ENCODE measurements at regions of chr2 and their contacts with region 1.

Region 1: GRCh38 chr2:181742922-181743722 is 62.8 kb upstream of the NEUROD1 start:
- DNase-seq: peak; percentile 17
- ATAC-seq: peak; percentile 58
- H3K4me3 ChIP-seq: no peak overlapping the region
- H3K27ac ChIP-seq: no peak overlapping the region
- H3K4me1 ChIP-seq: no peaks in the 10 kb centered on the region
- H3K27me3 ChIP-seq: no peaks in the 10 kb centered on the region
- CTCF ChIP-seq: peak; percentile 47 to 72 (median 53); a peak in 5 of 6 replicates
- EP300 ChIP-seq: no peak
- POLR2A ChIP-seq: no peak
- RAD21 ChIP-seq: peak; percentile 83

Region 2: DNA sequence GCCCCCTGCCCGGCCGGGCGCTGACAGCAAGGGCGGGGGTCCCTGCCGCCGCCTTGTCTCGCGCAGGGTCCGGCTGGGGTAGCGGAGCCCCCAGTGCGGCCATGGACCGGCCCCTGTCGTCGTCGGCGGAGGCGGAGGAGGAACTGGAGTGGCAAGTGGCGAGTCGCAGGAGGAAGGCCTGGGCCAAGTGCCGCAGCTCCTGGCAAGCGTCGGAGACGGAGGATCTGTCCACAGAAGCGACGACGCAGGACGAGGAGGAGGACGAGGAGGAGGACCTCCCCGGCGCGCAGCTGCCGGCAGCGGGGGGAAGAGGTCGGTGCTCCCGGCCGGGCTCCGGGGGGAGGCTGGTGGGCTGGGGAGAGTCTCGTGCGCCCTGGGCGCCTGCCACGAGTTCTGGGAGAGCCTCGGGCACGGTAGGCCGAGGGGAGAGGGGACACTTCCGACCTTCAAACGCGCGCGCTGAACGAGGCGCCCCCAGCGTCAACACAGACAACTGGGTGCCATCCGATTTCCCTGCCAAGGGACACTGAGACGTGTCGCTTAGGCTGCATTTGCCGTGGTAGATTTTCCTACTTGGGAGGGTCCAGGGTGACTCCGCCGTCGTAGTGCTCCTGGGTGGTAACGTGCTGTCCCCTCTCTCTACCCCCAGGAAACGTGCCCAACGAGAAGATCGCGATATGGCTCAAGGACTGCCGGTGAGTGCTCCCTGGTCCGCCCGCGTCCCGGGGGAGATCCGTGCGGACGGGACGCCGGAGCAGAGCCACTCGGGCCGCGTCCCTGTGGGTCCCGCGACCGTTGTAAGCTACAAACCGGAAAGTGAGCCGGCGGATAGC is 149.1 kb after region 1 on chr2:
- CTCF ChIA-PET with region 1: interaction called, 12 read pairs
- POLR2A ChIA-PET with region 1: no interaction called
- RAD21 ChIA-PET with region 1: interaction called, 3 read pairs
- SMC1A ChIA-PET with region 1: interaction called, 4 read pairs
- in situ Hi-C with region 1: no loop called
- intact Hi-C with region 1: no loop called
- DNase-seq: no peak
- ATAC-seq: peak; percentile 82
- H3K4me3 ChIP-seq: peak overlapping the region; percentile 81
- H3K27ac ChIP-seq: peak overlapping the region; percentile 41
- H3K4me1 ChIP-seq: no peaks in the 10 kb centered on the region
- H3K27me3 ChIP-seq: no peaks in the 10 kb centered on the region
- CTCF ChIP-seq: peak; percentile 21 to 49 (median 40); a peak in 4 of 6 replicates
- EP300 ChIP-seq: no peak
- POLR2A ChIP-seq: peak; percentile 61
- RAD21 ChIP-seq: no peak

Region 3: GRCh38 chr2:181904022-181904632 is 161.0 kb after region 1 on chr2:
- CTCF ChIA-PET with region 1: interaction called, 53 read pairs
- POLR2A ChIA-PET with region 1: no interaction called
- RAD21 ChIA-PET with region 1: interaction called, 8 read pairs
- SMC1A ChIA-PET with region 1: interaction called, 13 read pairs
- in situ Hi-C with region 1: loop called (anchors 5 kb)
- intact Hi-C with region 1: loop called (anchors 1 kb)
- DNase-seq: no peak
- ATAC-seq: peak; percentile 85
- H3K4me3 ChIP-seq: no peak overlapping the region
- H3K27ac ChIP-seq: no peak overlapping the region
- H3K4me1 ChIP-seq: peaks cover 20% of the 10 kb centered on the region; the same call in 1 of the 2 replicates
- H3K27me3 ChIP-seq: no peaks in the 10 kb centered on the region
- CTCF ChIP-seq: peak; percentile 56
- EP300 ChIP-seq: no peak
- POLR2A ChIP-seq: no peak
- RAD21 ChIP-seq: peak; percentile 60

Region 4: DNA sequence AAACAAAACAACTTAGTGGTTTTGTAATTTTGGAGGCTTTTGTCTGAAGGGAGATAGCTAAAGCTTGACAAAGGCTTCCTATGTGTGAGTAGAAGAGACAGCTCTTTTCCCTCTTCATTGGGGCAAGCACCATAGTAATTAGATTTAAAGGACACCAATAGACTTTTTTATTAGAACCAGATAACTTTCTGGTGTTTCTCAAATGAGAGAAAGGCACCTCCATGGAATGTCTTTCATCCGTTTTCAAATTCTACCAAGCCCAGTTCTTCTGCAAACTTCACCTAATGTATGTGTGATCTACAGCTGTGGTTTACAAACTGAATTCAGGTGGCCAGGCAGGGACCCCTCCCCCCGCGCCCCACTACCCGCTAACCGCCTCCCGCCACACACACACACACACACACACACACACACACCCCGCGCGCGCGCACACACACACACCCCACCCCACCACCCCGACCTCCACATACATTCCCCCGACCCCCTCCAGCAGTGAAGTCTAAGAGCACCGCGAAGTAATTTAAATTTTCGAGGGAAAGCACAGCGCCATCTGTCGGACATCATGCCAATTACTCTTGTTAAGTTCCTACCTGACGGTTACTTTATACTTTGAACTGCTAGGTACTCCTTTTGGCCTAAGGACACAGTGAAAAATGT is 210.9 kb after region 1 on chr2:
- CTCF ChIA-PET with region 1: interaction called, 24 read pairs
- POLR2A ChIA-PET with region 1: no interaction called
- RAD21 ChIA-PET with region 1: interaction called, 9 read pairs
- SMC1A ChIA-PET with region 1: interaction called, 16 read pairs
- in situ Hi-C with region 1: no loop called
- intact Hi-C with region 1: loop called (anchors 1 kb)
- DNase-seq: peak; percentile 19
- ATAC-seq: peak; percentile 92
- H3K4me3 ChIP-seq: no peak overlapping the region
- H3K27ac ChIP-seq: no peak overlapping the region
- H3K4me1 ChIP-seq: no peaks in the 10 kb centered on the region
- H3K27me3 ChIP-seq: no peaks in the 10 kb centered on the region
- CTCF ChIP-seq: peak; percentile 63 to 69 (median 66)
- EP300 ChIP-seq: no peak
- POLR2A ChIP-seq: no peak
- RAD21 ChIP-seq: peak; percentile 57